H1 (cell line): ENCODE measurements at regions of chr5 and their contacts with region 1.

Region 1: DNA sequence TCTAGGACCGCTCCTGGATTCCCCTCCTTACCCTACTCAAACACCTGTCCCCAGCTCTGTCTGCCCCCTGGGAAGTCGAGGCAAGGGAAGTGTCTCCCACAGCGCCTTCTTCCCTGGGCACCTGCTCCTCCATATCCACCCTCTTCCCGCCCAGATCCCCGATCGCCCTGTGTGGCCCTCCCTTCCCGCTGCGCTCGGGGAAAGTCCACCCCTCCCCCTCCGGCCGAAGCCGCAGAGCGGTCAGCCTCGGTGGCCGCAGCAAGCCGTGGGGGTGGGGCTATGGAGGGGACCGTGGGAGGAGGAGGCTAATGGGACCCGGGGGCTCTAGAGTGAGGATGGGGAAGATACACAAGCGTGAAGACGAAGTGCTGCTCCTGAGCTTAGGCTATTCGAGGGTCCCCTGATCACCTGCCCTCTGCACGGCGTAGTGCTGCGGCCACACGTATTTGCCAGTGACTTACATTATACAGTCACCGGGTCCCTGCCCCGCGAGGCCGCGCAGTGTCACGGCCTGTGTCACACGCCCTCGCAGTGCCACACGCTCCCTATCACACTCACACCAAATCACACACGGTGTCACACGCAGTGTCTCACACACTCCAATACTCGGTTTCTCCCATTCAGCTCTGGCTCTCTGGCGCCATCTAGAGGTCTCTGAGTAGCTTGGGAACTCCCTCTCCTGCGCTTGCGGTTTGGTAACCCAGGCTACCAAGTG is 658 bp upstream of the PCDH1 start:
- DNase-seq: peak in 1 of 2 experiments; percentile 92
- H3K4me3 ChIP-seq: peak overlapping the region; percentile 49 to 81 (median 66)
- H3K27ac ChIP-seq: peak overlapping the region; percentile 75
- H3K4me1 ChIP-seq: peaks cover 24 to 64% (median 47%) of the 10 kb centered on the region in 4 experiments
- H3K27me3 ChIP-seq: peaks cover 0 to 4% (median 0%) of the 10 kb centered on the region in 4 experiments; a peak in 1 of 7 replicates
- CTCF ChIP-seq: peak in 2 of 3 experiments; percentile 87 to 98; a peak in 3 of 4 replicates
- EP300 ChIP-seq: no peak
- POLR2A ChIP-seq: no peak; a peak in 1 of 3 replicates
- RAD21 ChIP-seq: peak; percentile 92 to 94

Region 2: DNA sequence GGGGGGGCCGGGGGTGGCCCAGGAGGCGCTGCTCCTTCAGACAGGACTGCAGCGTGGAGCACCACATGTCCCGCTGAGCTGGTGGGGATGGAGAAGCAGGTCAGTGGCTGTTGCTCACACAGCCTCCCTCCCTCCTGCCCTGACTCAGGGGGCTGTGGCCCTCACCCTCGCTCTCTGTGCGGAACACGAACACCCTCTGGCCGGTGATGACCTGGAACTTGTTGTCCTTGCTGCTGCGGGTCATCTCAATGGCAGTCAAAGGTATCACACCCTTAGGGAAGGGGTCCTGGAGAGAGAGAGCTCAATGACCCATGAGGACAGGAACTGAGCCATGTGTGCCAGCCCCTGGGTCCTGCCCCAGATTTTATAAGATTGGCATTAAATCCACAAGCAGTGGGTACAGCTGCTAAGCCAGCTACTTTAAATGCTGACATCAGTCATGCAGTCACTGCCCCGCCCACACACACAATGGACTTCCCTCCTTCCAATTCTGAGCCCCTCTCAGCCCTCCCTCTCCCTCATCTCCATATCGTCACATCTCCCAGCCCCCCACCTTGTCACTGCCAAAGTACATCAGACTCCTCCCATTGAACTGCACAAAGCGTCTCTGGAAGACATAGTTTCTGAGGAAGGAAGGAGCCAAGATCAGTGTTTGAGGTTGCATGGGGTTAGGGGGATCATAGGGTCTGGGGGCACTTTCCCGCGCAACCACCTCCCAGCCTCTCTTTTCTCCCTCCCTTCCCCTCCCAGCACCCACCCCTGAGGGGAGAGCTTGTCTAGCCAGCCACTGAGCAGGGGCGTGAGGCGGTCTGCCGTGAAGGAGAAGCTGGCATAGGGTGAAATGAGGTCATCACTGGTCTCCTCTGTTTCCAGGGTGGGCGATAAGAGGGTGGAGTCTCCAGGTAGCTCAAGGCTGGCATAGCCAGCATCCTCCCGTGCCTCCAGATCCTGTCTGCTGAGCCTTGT is 205.7 kb before region 1 on chr5:
- CTCF ChIA-PET with region 1: interaction called, 21 read pairs
- POLR2A ChIA-PET with region 1: interaction called, 4 read pairs
- DNase-seq: no peak
- H3K4me3 ChIP-seq: no peak overlapping the region
- H3K27ac ChIP-seq: no peak overlapping the region; the same call in 1 of the 2 replicates
- H3K4me1 ChIP-seq: peaks cover 2 to 13% (median 8%) of the 10 kb centered on the region in 4 experiments; a peak in 5 of 7 replicates
- H3K27me3 ChIP-seq: no peaks in the 10 kb centered on the region
- CTCF ChIP-seq: no peak
- EP300 ChIP-seq: no peak
- POLR2A ChIP-seq: no peak
- RAD21 ChIP-seq: no peak

Region 3: GRCh38 chr5:141729387-141730006 is 149.4 kb before region 1 on chr5:
- CTCF ChIA-PET with region 1: interaction called, 23 read pairs
- POLR2A ChIA-PET with region 1: interaction called, 3 read pairs
- DNase-seq: no peak
- H3K4me3 ChIP-seq: no peak overlapping the region
- H3K27ac ChIP-seq: no peak overlapping the region
- H3K4me1 ChIP-seq: peaks cover 1 to 11% (median 8%) of the 10 kb centered on the region in 4 experiments; a peak in 3 of 7 replicates
- H3K27me3 ChIP-seq: no peaks in the 10 kb centered on the region
- CTCF ChIP-seq: no peak
- EP300 ChIP-seq: no peak
- POLR2A ChIP-seq: no peak
- RAD21 ChIP-seq: no peak

Region 4: GRCh38 chr5:141783005-141783941 is 95.6 kb before region 1 on chr5:
- CTCF ChIA-PET with region 1: interaction called, 18 read pairs
- POLR2A ChIA-PET with region 1: interaction called, 3 read pairs
- DNase-seq: no peak
- H3K4me3 ChIP-seq: no peak overlapping the region
- H3K27ac ChIP-seq: no peak overlapping the region
- H3K4me1 ChIP-seq: peaks cover 0 to 20% (median 7%) of the 10 kb centered on the region in 4 experiments; a peak in 6 of 7 replicates
- H3K27me3 ChIP-seq: no peaks in the 10 kb centered on the region
- CTCF ChIP-seq: no peak
- EP300 ChIP-seq: no peak
- POLR2A ChIP-seq: no peak
- RAD21 ChIP-seq: no peak

Region 5: GRCh38 chr5:141811287-141812155 is 67.3 kb before region 1 on chr5:
- CTCF ChIA-PET with region 1: interaction called, 265 read pairs
- POLR2A ChIA-PET with region 1: interaction called, 160 read pairs
- DNase-seq: peak in 1 of 2 experiments; percentile 89
- H3K4me3 ChIP-seq: peak overlapping the region in 2 of 4 experiments; percentile 21 to 53; a peak in 5 of 8 replicates
- H3K27ac ChIP-seq: no peak overlapping the region
- H3K4me1 ChIP-seq: peaks cover 33 to 51% (median 34%) of the 10 kb centered on the region in 4 experiments
- H3K27me3 ChIP-seq: no peaks in the 10 kb centered on the region; a peak in 1 of 7 replicates
- CTCF ChIP-seq: peak in 2 of 3 experiments; percentile 80 to 91; a peak in 3 of 4 replicates
- EP300 ChIP-seq: peak in 1 of 2 experiments; percentile 52; a peak in 1 of 3 replicates
- POLR2A ChIP-seq: no peak
- RAD21 ChIP-seq: peak; percentile 66 to 74

Region 6: GRCh38 chr5:141855265-141856036 is 23.4 kb before region 1 on chr5:
- CTCF ChIA-PET with region 1: interaction called, 273 read pairs
- POLR2A ChIA-PET with region 1: interaction called, 210 read pairs
- DNase-seq: no peak
- H3K4me3 ChIP-seq: no peak overlapping the region
- H3K27ac ChIP-seq: 0 out of 2 replicates have a peak overlapping the region, but pooled peaks have one; percentile 10
- H3K4me1 ChIP-seq: peaks cover 20 to 48% (median 37%) of the 10 kb centered on the region in 4 experiments
- H3K27me3 ChIP-seq: no peaks in the 10 kb centered on the region
- CTCF ChIP-seq: no peak
- EP300 ChIP-seq: no peak
- POLR2A ChIP-seq: no peak
- RAD21 ChIP-seq: no peak

Region 7: GRCh38 chr5:141923448-141924352 is 44.8 kb after region 1 on chr5 and contains the start of gene DELE1:
- CTCF ChIA-PET with region 1: interaction called, 34 read pairs
- POLR2A ChIA-PET with region 1: interaction called, 7 read pairs
- DNase-seq: peak; percentile 69 to 90
- H3K4me3 ChIP-seq: peak within 1 kb of the TSS; percentile 68 to 84 (median 74)
- H3K27ac ChIP-seq: peak within 1 kb of the TSS; percentile 71; the same call in 1 of the 2 replicates
- H3K4me1 ChIP-seq: peaks cover 0 to 3% (median 3%) of the 10 kb centered on the region in 4 experiments; a peak in 3 of 7 replicates
- H3K27me3 ChIP-seq: no peaks in the 10 kb centered on the region
- CTCF ChIP-seq: peak in 1 of 3 experiments; percentile 5; a peak in 1 of 4 replicates
- EP300 ChIP-seq: no peak
- POLR2A ChIP-seq: peak in 1 of 2 experiments; percentile 84; a peak in 2 of 3 replicates
- RAD21 ChIP-seq: peak in 1 of 2 experiments; percentile 9; a peak in 1 of 4 replicates
- total RNA-seq, gene DELE1: 59.6 and 61.4 TPM in 2 replicates

Region 8: GRCh38 chr5:142006363-142007236 is 127.7 kb after region 1 on chr5:
- CTCF ChIA-PET with region 1: no interaction called
- POLR2A ChIA-PET with region 1: no interaction called
- DNase-seq: no peak
- H3K4me3 ChIP-seq: no peak overlapping the region
- H3K27ac ChIP-seq: no peak overlapping the region
- H3K4me1 ChIP-seq: no peaks in the 10 kb centered on the region; a peak in 2 of 7 replicates
- H3K27me3 ChIP-seq: no peaks in the 10 kb centered on the region
- CTCF ChIP-seq: no peak
- EP300 ChIP-seq: no peak
- POLR2A ChIP-seq: no peak
- RAD21 ChIP-seq: no peak